ENCODE measurements at regions of chr2 and their contacts with region 1.

Region 1: DNA sequence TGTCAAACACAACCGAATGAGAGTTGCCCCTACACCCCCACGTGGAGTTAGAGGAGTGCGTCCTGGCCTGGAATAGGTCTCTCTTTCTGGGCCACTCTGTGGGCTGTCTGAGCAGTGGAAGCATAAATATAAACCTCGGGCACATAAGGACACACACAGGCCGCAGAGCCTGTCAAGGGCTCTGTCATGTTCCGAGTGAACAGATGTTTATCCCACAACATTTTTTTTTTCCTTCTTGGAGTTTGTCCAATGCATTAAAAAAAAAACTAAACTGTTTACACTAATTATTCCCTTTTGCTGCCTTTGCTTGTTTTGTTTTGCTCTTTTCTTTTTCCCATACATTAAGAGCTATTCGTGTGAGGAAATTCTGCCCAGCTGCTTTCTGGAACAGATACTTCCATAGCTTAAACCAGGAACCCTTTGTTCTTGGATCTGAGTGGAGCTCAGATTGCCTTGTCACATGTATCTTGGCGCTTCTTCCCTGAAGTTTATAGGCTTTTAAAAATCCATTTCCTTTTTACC is 228.3 kb upstream of the FOSL2 start:
- DNase-seq: no peak
- ATAC-seq: no peak
- H3K4me3 ChIP-seq: no peak overlapping the region
- H3K27ac ChIP-seq: no peak overlapping the region
- H3K4me1 ChIP-seq: no peaks in the 10 kb centered on the region
- H3K27me3 ChIP-seq: no peaks in the 10 kb centered on the region
- CTCF ChIP-seq: no peak
- EP300 ChIP-seq: no peak
- POLR2A ChIP-seq: no peak
- RAD21 ChIP-seq: no peak

Region 2: GRCh38 chr2:28406276-28407096 is 242.1 kb after region 1 on chr2:
- CTCF ChIA-PET with region 1: no interaction called
- POLR2A ChIA-PET with region 1: no interaction called
- in situ Hi-C with region 1: loop called (anchors 10 kb)
- intact Hi-C with region 1: no loop called
- DNase-seq: peak in 1 of 4 experiments; percentile 17
- ATAC-seq: peak; percentile 37
- H3K4me3 ChIP-seq: no peak overlapping the region
- H3K27ac ChIP-seq: no peak overlapping the region
- H3K4me1 ChIP-seq: peaks cover 0 to 4% of the 10 kb centered on the region in 2 experiments; a peak in 1 of 5 replicates
- H3K27me3 ChIP-seq: peaks cover 8 to 12% of the 10 kb centered on the region in 2 experiments
- CTCF ChIP-seq: no peak
- EP300 ChIP-seq: no peak
- POLR2A ChIP-seq: no peak
- RAD21 ChIP-seq: no peak